ENCODE measurements at regions of chr7 and their contacts with region 1.

Region 1: DNA sequence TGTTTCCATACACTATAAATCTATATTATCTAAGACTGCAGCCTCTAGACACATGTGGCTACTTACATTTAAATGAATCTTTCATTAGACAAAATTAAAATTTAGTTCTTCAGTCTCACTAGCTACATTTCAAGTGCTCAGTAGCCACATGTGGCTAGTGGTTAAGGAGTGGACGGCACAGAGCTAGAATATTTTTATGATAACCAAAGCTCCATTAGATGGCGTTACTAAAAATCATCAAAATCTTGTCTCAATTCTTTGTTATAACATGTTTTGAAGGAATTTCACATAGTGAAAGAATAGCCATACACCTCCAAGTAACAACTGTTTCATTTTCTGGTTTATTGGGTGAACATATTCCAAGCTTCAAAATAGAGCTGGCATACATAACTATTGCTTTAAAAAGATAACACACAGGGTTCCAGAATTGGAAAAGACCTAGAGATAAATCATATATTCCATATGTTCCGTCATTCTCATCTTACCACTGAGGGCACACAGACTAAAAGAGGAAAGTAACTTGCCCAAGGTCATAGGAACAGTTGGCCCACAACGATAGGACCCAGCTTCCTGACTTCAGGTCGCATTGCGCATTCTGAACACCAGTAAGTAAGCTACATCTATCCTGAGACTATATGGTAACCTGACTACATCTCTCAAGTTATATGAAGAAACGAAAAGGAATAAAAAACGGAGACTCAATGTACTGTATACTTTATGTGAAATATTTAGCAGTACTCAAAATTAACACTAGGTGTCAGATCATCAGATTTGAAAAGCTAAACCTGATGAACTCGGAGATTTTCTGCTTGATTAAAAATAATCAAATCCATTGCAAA is 66.6 kb downstream of the CAV1 start:
- DNase-seq: no peak
- H3K4me3 ChIP-seq: no peak overlapping the region
- CTCF ChIP-seq: peak; percentile 33

Region 2: GRCh38 chr7:116258734-116259133 is 332.7 kb before region 1 on chr7:
- in situ Hi-C with region 1: loop called (anchors 10 kb)
- DNase-seq: peak; percentile 68
- H3K4me3 ChIP-seq: no peak overlapping the region
- CTCF ChIP-seq: peak; percentile 66

Region 3: DNA sequence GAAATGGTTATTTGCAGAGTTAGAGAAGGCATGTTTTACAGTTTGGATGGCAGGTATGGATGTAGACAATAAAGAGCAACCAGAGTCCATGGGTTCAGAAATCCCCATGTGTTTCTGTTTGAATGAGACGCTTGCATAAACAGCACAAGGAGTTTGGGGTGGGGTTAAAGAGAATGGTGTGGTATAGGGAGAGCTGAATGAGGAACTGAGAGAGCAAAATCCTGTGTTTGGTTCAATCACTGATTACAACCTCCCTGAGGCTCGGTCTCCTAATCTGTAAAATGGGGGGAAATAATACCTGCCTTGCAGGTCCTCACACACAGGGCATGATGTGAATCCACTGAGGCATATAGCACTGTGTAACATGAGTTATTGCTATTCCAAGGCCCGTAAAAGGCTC is 42.9 kb before region 1 on chr7:
- in situ Hi-C with region 1: no loop called
- DNase-seq: no peak
- H3K4me3 ChIP-seq: no peak overlapping the region
- CTCF ChIP-seq: no peak

Region 4: GRCh38 chr7:116792813-116793212 is 201.4 kb after region 1 on chr7:
- in situ Hi-C with region 1: loop called (anchors 5 kb)
- DNase-seq: no peak
- H3K4me3 ChIP-seq: no peak overlapping the region
- CTCF ChIP-seq: no peak

Measured in astrocyte of the cerebellum (primary cell).